ENCODE measurements at regions of chrX and their contacts with region 1.

Region 1: DNA sequence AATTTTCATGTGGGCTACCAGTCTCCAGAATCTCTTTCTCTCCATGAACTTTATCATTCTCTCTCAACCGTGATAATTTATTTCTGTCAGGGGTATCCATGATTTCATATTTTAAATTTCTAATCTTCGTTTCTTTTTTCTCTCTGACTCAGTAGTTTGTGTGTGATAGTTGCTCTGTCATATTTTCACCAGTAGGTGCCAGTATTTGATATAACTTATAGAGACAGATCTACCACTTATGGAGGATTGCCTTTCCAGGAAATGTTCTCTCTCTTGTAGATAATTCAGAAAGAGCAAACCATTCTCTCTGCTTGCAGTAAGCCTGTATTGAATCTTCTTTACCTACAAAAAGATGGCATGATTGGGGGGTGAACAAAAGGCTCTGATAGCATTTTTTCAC is 79.3 kb upstream of the DYNLT3 start:
- DNase-seq: peak; percentile 69
- H3K4me3 ChIP-seq: no peak overlapping the region
- H3K27ac ChIP-seq: no peak overlapping the region
- H3K4me1 ChIP-seq: peaks cover 4% of the 10 kb centered on the region
- H3K27me3 ChIP-seq: no peaks in the 10 kb centered on the region
- CTCF ChIP-seq: peak; percentile 71

Region 2: DNA sequence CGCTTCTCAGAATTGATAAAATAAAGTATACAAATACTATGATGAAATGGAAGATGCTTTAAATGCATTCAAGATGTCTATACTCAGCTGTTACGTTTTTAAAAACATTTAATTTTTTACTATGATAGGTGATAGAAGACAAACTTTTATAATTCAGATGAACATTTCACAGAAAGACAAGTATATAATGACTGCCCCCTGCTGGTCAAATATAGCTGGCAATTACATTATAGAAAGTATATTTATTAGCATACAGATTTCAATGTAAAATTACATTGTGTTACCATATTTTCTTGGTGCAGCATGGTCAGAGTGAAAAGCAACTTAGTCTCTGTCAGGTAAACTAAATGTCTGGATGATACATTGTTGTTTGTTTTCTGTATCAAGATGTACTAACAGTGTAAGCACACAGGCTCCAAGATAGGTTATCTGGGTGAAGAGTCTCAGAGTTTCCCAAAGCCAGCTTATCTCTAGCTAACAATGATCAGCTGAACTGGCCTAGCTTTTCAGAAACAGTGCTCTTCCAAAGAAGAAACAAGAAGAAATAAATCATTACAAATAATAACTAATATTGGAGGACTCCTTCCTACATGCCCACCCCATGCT is 239.9 kb after region 1 on chrX:
- CTCF ChIA-PET with region 1: no interaction called
- POLR2A ChIA-PET with region 1: no interaction called
- intact Hi-C with region 1: loop called (anchors 1 kb)
- DNase-seq: peak; percentile 54
- H3K4me3 ChIP-seq: no peak overlapping the region
- H3K27ac ChIP-seq: no peak overlapping the region
- H3K4me1 ChIP-seq: no peaks in the 10 kb centered on the region
- H3K27me3 ChIP-seq: no peaks in the 10 kb centered on the region
- CTCF ChIP-seq: peak; percentile 79

Region 3: GRCh38 chrX:38175140-38175539 is 248.4 kb after region 1 on chrX:
- CTCF ChIA-PET with region 1: no interaction called
- POLR2A ChIA-PET with region 1: no interaction called
- intact Hi-C with region 1: loop called (anchors 2 kb)
- DNase-seq: peak; percentile 72
- H3K4me3 ChIP-seq: no peak overlapping the region
- H3K27ac ChIP-seq: no peak overlapping the region
- H3K4me1 ChIP-seq: no peaks in the 10 kb centered on the region
- H3K27me3 ChIP-seq: no peaks in the 10 kb centered on the region
- CTCF ChIP-seq: peak; percentile 67